Activated CD4-positive, alpha-beta T cell treated with anti-CD3 and anti-CD28 coated beads, Interleukin-2, amount 10 ng/mL, durations not matched to agents 24 days and 14 days (primary cell): ENCODE measurements at regions of chr20 and their contacts with region 1.

Region 1: GRCh38 chr20:36460648-36461599 is 80.4 kb upstream of the MYL9 start:
- DNase-seq: peak; percentile 95
- H3K4me3 Mint-ChIP-seq: peak overlapping the region; percentile 74
- H3K27ac Mint-ChIP-seq: peak overlapping the region; percentile 82
- H3K4me1 Mint-ChIP-seq: peaks cover 42% of the 10 kb centered on the region
- H3K27me3 Mint-ChIP-seq: peaks cover 7% of the 10 kb centered on the region

Region 2: GRCh38 chr20:35771689-35772562 is 689.0 kb before region 1 on chr20 and contains the start of gene PHF20:
- intact Hi-C with region 1: loop called (anchors 10 kb)
- DNase-seq: peak; percentile 99
- H3K4me3 Mint-ChIP-seq: peak within 1 kb of the TSS; percentile 81
- H3K27ac Mint-ChIP-seq: peak within 1 kb of the TSS; percentile 93
- H3K4me1 Mint-ChIP-seq: peaks cover 51% of the 10 kb centered on the region
- H3K27me3 Mint-ChIP-seq: no peaks in the 10 kb centered on the region
- total RNA-seq, gene PHF20: 53.8 and 62.9 TPM in 2 replicates

Region 3: DNA sequence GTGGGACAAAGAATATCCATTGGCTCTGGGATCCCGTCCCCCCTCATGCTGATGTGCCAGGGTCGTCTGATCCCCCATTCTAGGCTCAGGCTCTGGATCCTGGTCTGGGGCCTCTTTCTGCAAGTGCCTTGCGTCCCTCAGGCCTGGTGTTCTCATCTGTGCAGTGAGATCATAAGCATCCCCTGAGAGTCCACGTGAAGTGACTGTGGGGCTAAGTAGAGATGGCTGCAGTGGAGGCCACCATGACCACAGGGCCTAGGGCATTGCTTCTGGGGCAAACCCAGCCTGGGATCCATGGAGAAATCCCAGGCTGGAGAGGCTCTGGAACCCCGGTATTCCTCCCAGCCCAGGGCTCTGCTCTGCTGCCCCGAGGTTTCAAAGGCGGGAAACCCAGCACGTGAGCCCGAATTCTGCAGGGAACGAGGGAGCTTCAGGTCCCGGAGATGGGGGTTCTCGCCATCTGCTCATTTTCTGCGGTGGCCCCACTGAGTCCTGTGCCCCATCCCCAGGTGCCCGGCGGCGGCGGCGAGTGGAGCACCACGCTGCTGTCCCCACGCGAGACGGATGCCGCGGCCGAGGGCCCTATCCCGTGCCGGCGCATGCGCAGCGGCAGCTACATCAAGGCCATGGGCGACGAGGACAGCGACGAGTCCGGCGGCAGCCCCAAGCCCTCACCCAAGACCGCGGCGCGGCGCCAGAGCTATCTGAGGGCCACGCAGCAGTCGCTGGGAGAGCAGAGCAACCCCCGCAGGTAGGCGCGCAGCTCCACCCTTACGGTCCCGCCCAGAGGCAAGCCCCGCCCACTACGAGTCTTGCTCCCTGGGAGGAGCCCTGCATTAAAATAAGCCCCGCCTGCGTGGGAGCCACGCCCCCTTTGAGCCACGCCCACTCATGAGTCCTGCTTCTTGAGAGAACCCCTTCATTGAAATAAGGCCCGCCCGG is 25.1 kb before region 1 on chr20:
- intact Hi-C with region 1: no loop called
- DNase-seq: peak; percentile 96
- H3K4me3 Mint-ChIP-seq: peak overlapping the region; percentile 43
- H3K27ac Mint-ChIP-seq: no peak overlapping the region
- H3K4me1 Mint-ChIP-seq: peaks cover 12% of the 10 kb centered on the region
- H3K27me3 Mint-ChIP-seq: peaks cover 7% of the 10 kb centered on the region

Region 4: GRCh38 chr20:36472637-36473081 is 11.7 kb after region 1 on chr20:
- intact Hi-C with region 1: no loop called
- DNase-seq: peak; percentile 82
- H3K4me3 Mint-ChIP-seq: peak overlapping the region; percentile 81
- H3K27ac Mint-ChIP-seq: peak overlapping the region; percentile 78
- H3K4me1 Mint-ChIP-seq: peaks cover 45% of the 10 kb centered on the region
- H3K27me3 Mint-ChIP-seq: no peaks in the 10 kb centered on the region

Region 5: DNA sequence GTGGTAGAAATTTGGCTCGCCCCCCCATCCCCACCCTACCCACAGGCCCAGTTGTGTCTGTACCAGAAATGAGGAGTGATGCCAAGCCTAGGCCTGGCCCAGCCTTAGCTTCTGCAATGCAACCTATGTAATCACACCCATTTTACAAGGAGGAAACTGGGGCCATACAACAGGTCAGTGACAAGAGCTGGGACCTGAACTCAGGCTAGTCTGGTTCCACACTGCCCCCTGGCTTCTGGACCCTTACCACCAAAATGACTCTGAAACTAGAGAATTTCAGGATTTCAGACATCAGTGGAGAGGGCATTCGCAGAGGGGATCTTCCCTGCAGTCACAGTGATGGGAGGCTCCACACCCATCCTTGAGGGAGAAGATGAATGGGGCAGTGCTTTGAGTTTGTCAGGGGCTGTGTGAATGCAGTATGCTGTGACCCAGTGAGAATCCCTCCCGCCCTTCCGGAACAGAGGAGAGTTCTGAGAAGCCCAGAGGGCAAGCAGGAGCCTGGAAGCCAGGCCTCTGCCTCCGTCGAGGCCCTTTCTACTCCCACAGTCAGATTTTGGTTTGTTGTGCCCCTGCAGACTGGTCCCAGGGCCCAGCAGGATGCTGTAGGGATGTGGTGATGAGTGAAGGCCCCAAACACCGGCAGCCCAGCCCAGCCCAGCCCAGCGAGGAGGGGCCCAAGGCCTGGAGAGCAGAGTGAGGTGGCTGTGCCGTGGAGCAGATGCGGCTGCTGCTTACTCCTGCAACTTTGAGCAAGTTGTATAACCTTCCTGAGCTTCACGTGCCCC is 32.3 kb after region 1 on chr20:
- intact Hi-C with region 1: loop called (anchors 2 kb)
- DNase-seq: no peak
- H3K4me3 Mint-ChIP-seq: no peak overlapping the region
- H3K27ac Mint-ChIP-seq: no peak overlapping the region
- H3K4me1 Mint-ChIP-seq: peaks cover 27% of the 10 kb centered on the region
- H3K27me3 Mint-ChIP-seq: no peaks in the 10 kb centered on the region

Region 6: DNA sequence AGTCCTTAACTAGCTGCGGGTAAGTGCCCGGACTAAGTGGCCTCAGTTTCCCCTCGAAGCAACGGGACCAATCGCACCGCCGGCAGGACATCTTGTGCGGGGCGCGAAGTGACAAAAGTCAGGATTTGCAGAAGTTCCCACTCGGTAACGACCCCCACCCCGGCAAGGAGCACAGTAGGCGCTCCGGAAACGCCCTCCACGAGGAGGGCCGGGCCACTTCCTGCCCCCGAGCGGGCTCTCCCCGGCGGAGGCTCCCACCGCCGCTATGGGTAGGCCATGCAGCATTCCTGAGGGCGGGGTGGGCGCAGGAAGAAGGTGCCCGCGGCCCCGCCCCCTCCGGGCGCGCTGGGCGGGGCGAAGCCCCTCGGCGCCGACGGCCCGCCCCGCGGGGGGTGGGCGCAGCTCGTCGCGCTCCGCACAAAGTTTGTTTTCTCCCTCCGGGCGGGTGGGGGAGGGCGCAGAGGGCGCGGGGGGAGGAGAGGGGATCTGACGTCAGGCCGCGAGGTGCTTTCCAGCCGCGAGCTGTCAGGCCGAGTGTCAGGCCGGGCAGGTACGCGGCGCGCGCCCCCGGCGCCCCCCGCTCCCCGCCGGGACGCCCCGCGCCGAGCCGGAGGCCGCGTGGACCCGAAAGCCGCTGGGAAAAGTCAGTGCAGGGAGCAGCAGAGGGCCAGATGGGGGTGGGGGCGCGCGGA is 112.3 kb after region 1 on chr20 and contains the start of gene TGIF2:
- intact Hi-C with region 1: loop called (anchors 10 kb)
- DNase-seq: peak; percentile 95
- H3K4me3 Mint-ChIP-seq: peak within 1 kb of the TSS; percentile 93
- H3K27ac Mint-ChIP-seq: peak within 1 kb of the TSS; percentile 99
- H3K4me1 Mint-ChIP-seq: peaks cover 34% of the 10 kb centered on the region
- H3K27me3 Mint-ChIP-seq: no peaks in the 10 kb centered on the region
- total RNA-seq, gene TGIF2: 55.2 and 55.7 TPM in 2 replicates

Region 7: GRCh38 chr20:36591854-36592641 is 131.1 kb after region 1 on chr20:
- intact Hi-C with region 1: no loop called
- DNase-seq: peak; percentile 83
- H3K4me3 Mint-ChIP-seq: peak overlapping the region; percentile 65
- H3K27ac Mint-ChIP-seq: peak overlapping the region; percentile 77
- H3K4me1 Mint-ChIP-seq: peaks cover 53% of the 10 kb centered on the region
- H3K27me3 Mint-ChIP-seq: no peaks in the 10 kb centered on the region

Region 8: GRCh38 chr20:36745927-36746659 is 285.2 kb after region 1 on chr20 and contains the start of gene NDRG3:
- intact Hi-C with region 1: loop called (anchors 10 kb)
- DNase-seq: peak; percentile 97
- H3K4me3 Mint-ChIP-seq: peak within 1 kb of the TSS; percentile 93
- H3K27ac Mint-ChIP-seq: peak within 1 kb of the TSS; percentile 89
- H3K4me1 Mint-ChIP-seq: peaks cover 17% of the 10 kb centered on the region
- H3K27me3 Mint-ChIP-seq: no peaks in the 10 kb centered on the region
- total RNA-seq, gene NDRG3: 24.7 and 25.3 TPM in 2 replicates

Region 9: DNA sequence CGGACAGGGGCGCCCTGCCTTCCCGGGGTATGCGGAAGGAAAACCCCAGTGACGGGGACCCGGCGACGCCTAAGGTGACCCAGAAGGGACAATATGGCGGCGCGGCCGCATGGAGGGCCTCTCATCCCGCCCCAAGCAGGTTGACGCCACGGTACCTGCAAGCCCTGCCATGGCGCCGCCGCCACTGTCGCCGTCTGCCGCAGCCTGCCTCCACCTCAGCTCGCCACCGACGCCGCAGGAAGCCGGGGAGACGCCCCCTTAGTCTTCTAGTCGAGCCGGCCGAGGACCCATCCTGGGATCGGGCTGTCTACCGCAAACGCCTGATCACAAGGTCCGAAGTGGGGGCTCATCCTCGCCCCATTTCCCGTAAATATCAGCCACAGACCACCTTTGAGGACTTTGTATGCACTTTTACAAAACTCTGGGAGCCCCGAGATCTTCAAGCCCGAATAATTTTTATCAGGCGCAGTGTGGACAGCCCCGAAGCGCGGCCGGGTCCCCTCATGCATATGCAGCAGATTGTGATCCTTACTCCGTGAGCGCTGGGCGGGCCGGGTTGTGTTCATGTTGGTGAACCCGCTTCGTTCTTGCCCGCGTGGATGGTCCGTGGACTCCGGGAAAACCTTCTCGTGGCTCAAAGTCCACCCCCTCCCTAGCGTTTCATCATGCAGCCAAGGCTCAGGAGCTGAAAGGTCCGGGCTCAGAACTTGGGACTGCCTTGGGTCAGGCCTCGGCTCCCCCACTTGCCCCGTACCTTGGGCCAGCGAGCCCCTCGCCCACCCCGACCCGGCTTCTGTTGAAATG is 1066.9 kb after region 1 on chr20 and contains the start of gene BLCAP:
- intact Hi-C with region 1: loop called (anchors 10 kb)
- DNase-seq: peak; percentile 98
- H3K4me3 Mint-ChIP-seq: peak within 1 kb of the TSS; percentile 92
- H3K27ac Mint-ChIP-seq: peak within 1 kb of the TSS; percentile 100
- H3K4me1 Mint-ChIP-seq: peaks cover 42% of the 10 kb centered on the region
- H3K27me3 Mint-ChIP-seq: peaks cover 5% of the 10 kb centered on the region
- total RNA-seq, gene BLCAP: 31.7 and 31.9 TPM in 2 replicates